GM12878 (cell line): ENCODE measurements at regions of chr17 and their contacts with region 1.

Region 1: DNA sequence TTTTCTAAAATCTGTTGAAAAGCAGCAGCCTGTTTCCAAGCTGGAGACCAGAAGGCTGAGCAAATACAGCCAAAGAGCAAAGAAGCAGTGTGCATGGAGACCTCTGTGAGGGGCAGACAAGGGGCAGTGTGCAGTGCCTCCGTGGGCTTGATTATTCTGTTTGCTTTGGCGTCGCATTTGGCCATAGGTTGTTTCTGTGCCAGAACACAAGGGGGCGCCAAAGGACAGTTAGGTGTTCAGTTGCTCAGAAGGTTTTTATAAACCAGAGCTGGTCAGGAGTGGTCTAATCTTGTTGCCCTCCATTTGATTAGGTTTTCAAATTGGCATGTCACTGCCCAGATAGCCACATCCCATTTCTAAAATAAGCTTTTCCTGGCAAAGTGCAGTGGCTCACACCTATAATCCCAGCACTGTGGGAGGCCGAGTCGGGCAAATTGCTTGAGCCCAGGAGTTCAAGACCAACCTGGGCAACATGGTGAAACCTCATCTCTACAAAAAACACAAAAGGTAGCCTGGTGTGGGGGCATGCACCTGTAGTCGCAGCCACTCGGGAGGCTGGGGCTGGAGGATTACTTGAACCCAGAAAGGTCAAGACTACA is 10.6 kb downstream of the MYH3 start:
- DNase-seq: no peak
- ATAC-seq: peak; percentile 92
- H3K4me3 ChIP-seq: no peak overlapping the region
- H3K27ac ChIP-seq: no peak overlapping the region
- H3K4me1 ChIP-seq: no peaks in the 10 kb centered on the region
- H3K27me3 ChIP-seq: no peaks in the 10 kb centered on the region
- CTCF ChIP-seq: peak; percentile 83 to 85 (median 84)
- EP300 ChIP-seq: no peak
- POLR2A ChIP-seq: no peak
- RAD21 ChIP-seq: peak; percentile 84

Region 2: DNA sequence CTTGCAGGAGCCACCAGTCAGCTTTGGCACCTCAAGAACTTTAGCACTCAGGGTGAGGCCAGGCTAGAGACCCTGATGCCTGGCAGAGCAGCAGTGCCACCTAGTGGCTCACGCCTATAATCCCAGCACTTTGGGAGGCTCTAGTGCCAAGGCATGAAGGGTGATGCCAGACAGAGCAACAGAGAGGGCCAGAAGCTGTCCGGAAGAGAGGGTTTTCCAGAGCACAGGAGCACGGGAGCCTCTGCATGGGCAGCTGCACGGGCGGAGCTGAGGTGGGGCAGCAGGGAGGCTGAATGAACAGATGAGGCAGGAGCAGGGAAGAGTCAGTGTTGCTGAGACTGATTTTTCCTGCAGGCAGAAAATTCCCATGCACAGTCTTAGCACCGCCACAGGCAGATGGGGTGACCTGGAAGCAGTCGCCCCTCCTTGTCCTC is 28.3 kb before region 1 on chr17:
- CTCF ChIA-PET with region 1: interaction called, 37 read pairs
- POLR2A ChIA-PET with region 1: no interaction called
- RAD21 ChIA-PET with region 1: no interaction called
- SMC1A ChIA-PET with region 1: interaction called, 3 read pairs
- in situ Hi-C with region 1: no loop called
- intact Hi-C with region 1: no loop called
- DNase-seq: no peak
- ATAC-seq: peak; percentile 96
- H3K4me3 ChIP-seq: no peak overlapping the region
- H3K27ac ChIP-seq: no peak overlapping the region
- H3K4me1 ChIP-seq: no peaks in the 10 kb centered on the region
- H3K27me3 ChIP-seq: no peaks in the 10 kb centered on the region
- CTCF ChIP-seq: peak; percentile 82 to 95 (median 92)
- EP300 ChIP-seq: no peak
- POLR2A ChIP-seq: no peak
- RAD21 ChIP-seq: peak; percentile 72

Region 3: DNA sequence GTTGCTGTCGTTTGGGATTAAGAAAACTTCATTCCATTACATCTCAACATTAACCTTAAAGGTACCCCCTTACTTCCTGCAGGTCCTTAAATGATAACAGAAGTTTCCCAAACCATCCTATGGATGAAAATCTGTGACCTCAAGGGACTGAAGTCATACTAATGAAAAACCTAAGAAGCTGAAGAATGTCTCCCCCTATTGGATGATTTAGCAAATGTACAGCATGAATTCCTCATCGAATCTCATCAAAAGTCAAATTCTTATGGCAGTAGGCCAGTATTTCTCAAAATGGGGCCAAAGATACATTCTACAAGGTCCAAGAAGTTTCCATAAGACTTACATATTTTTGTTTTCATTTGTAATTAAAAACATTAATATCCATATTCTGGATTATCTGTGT is 37.4 kb after region 1 on chr17:
- CTCF ChIA-PET with region 1: interaction called, 11 read pairs
- POLR2A ChIA-PET with region 1: no interaction called
- RAD21 ChIA-PET with region 1: no interaction called
- SMC1A ChIA-PET with region 1: interaction called, 6 read pairs
- in situ Hi-C with region 1: no loop called
- intact Hi-C with region 1: no loop called
- DNase-seq: no peak
- ATAC-seq: no peak
- H3K4me3 ChIP-seq: no peak overlapping the region
- H3K27ac ChIP-seq: no peak overlapping the region
- H3K4me1 ChIP-seq: no peaks in the 10 kb centered on the region
- H3K27me3 ChIP-seq: no peaks in the 10 kb centered on the region
- CTCF ChIP-seq: peak; percentile 30 to 61 (median 32); a peak in 5 of 6 replicates
- EP300 ChIP-seq: no peak
- POLR2A ChIP-seq: no peak
- RAD21 ChIP-seq: peak; percentile 34; the same call in 1 of the 2 replicates

Region 4: GRCh38 chr17:10844621-10845387 is 198.3 kb after region 1 on chr17:
- CTCF ChIA-PET with region 1: interaction called, 53 read pairs
- POLR2A ChIA-PET with region 1: no interaction called
- RAD21 ChIA-PET with region 1: interaction called, 17 read pairs
- SMC1A ChIA-PET with region 1: interaction called, 12 read pairs
- in situ Hi-C with region 1: loop called (anchors 5 kb)
- intact Hi-C with region 1: loop called (anchors 1 kb)
- DNase-seq: peak; percentile 5
- ATAC-seq: peak; percentile 99
- H3K4me3 ChIP-seq: 0 out of 2 replicates have a peak overlapping the region, but pooled peaks have one; percentile 9
- H3K27ac ChIP-seq: no peak overlapping the region
- H3K4me1 ChIP-seq: no peaks in the 10 kb centered on the region
- H3K27me3 ChIP-seq: no peaks in the 10 kb centered on the region; a peak in 1 of 4 replicates
- CTCF ChIP-seq: peak; percentile 81 to 93 (median 84)
- EP300 ChIP-seq: no peak
- POLR2A ChIP-seq: no peak
- RAD21 ChIP-seq: peak; percentile 72

Region 5: GRCh38 chr17:11296994-11297393 is 650.5 kb after region 1 on chr17:
- CTCF ChIA-PET with region 1: no interaction called
- POLR2A ChIA-PET with region 1: no interaction called
- RAD21 ChIA-PET with region 1: no interaction called
- SMC1A ChIA-PET with region 1: interaction called, 3 read pairs
- in situ Hi-C with region 1: loop called (anchors 25 kb)
- intact Hi-C with region 1: no loop called
- DNase-seq: no peak
- ATAC-seq: no peak
- H3K4me3 ChIP-seq: no peak overlapping the region
- H3K27ac ChIP-seq: no peak overlapping the region
- H3K4me1 ChIP-seq: no peaks in the 10 kb centered on the region
- H3K27me3 ChIP-seq: no peaks in the 10 kb centered on the region
- CTCF ChIP-seq: peak in 1 of 3 experiments; percentile 18; a peak in 1 of 6 replicates
- EP300 ChIP-seq: no peak
- POLR2A ChIP-seq: no peak
- RAD21 ChIP-seq: no peak